Activated CD4-positive, alpha-beta T cell treated with anti-CD3 and anti-CD28 coated beads for 36 hours (primary cell): ENCODE measurements at regions of chr11 and their contacts with region 1.

Region 1: GRCh38 chr11:32893343-32894148 is 935 bp downstream of the QSER1 start:
- DNase-seq: peak; percentile 77
- ATAC-seq: peak; percentile 45
- H3K4me3 Mint-ChIP-seq: peak overlapping the region; percentile 97
- H3K27ac Mint-ChIP-seq: peak overlapping the region; percentile 98
- H3K4me1 Mint-ChIP-seq: peaks cover 38% of the 10 kb centered on the region
- H3K27me3 Mint-ChIP-seq: no peaks in the 10 kb centered on the region

Region 2: GRCh38 chr11:32090545-32091373 is 802.8 kb before region 1 on chr11 and contains the start of gene RCN1:
- CTCF ChIA-PET with region 1: no interaction called
- POLR2A ChIA-PET with region 1: no interaction called
- intact Hi-C with region 1: loop called in 1 of 2 experiments (anchors 2 kb)
- DNase-seq: peak; percentile 62
- ATAC-seq: peak; percentile 59
- H3K4me3 Mint-ChIP-seq: peak within 1 kb of the TSS; percentile 79
- H3K27ac Mint-ChIP-seq: peak within 1 kb of the TSS; percentile 85
- H3K4me1 Mint-ChIP-seq: peaks cover 43% of the 10 kb centered on the region
- H3K27me3 Mint-ChIP-seq: peaks cover 10% of the 10 kb centered on the region
- total RNA-seq, gene RCN1: 19.1 to 24.1 TPM

Region 3: DNA sequence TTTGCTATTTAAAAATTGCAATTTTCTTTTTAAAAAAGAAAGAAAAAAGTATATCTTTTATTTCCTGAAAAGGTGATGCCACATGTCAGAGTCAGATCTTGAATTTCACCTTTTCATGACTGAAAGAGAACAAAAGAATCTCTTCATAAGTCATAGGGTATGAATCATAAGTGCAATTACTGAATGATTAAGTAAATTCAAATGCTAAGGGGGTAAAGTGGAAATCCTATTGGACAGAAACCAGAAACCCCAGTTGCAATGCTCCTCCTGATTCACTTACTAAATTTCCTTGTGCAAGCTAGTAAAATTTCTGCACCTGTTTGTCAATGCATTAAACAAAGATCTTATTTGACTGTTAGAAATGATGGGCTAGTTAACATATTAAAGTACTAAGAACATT is 72.0 kb before region 1 on chr11:
- CTCF ChIA-PET with region 1: interaction called, 3 read pairs
- POLR2A ChIA-PET with region 1: interaction called, 9 read pairs
- intact Hi-C with region 1: loop called (anchors 2 kb)
- DNase-seq: no peak
- ATAC-seq: peak; percentile 66
- H3K4me3 Mint-ChIP-seq: no peak overlapping the region
- H3K27ac Mint-ChIP-seq: no peak overlapping the region
- H3K4me1 Mint-ChIP-seq: peaks cover 24% of the 10 kb centered on the region
- H3K27me3 Mint-ChIP-seq: no peaks in the 10 kb centered on the region

Region 4: DNA sequence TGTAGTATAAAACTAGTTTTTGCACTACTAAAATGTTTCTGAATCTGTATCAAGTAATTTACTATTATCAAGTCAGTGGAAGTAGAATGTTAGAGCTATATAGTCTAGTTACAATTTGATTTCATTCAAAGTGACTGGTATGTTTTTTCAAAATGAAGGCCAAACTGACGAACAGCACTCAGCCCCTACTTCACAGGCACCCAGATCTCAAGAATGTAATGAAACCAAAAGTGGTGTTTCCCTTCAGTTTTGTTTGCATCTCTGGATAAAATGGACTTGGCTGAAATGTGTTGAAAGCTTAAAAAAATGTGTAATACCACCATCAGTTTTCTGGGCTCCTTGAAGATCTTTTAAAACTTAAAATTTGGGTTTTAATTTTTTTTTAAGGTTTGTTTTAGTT is 45.5 kb after region 1 on chr11:
- CTCF ChIA-PET with region 1: no interaction called
- POLR2A ChIA-PET with region 1: interaction called, 11 read pairs
- intact Hi-C with region 1: no loop called
- DNase-seq: no peak
- ATAC-seq: no peak
- H3K4me3 Mint-ChIP-seq: no peak overlapping the region
- H3K27ac Mint-ChIP-seq: no peak overlapping the region
- H3K4me1 Mint-ChIP-seq: peaks cover 17% of the 10 kb centered on the region
- H3K27me3 Mint-ChIP-seq: no peaks in the 10 kb centered on the region

Region 5: DNA sequence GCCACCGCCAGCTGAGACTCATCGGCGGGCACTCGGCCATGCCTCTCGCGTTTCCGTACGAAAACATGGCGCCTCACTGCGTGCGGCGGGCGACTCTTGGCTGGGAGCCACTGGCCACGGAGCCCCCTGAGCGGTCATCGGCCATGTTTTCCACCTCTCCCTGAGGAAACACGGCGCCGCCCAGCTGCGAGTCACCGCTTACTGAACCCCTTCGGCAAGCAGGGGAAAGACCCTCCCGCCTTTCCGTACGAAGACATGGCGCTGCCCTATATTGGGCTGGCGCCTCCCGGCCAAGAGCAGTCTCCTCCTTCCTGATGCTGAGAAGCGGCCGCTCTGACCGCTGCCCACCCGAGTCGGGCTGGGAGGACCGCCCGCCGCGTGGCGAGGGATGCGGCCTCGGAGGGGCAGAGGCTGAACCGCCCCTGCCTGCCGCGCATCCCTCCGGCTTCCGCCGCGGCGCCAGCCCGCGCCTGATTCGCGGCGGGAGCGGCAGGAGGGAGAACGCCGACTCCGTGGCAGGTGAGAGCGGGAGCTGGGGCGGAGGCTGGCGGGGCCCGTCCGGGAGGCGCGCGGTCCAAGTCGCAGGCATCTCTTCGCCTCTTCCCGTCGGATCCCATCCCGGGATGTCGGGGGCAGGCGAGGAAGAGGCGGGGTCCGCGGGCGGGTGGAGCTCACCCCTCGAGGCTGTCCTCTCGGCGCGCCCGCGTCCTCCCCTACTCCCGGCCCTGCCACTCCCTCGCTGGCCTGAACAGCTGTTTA is 145.9 kb after region 1 on chr11 and contains the start of gene TCP11L1:
- CTCF ChIA-PET with region 1: interaction called, 4 read pairs
- POLR2A ChIA-PET with region 1: interaction called, 3 read pairs
- intact Hi-C with region 1: loop called (anchors 1 to 2 kb)
- DNase-seq: peak; percentile 89
- ATAC-seq: peak; percentile 71
- H3K4me3 Mint-ChIP-seq: peak within 1 kb of the TSS; percentile 87
- H3K27ac Mint-ChIP-seq: peak within 1 kb of the TSS; percentile 95
- H3K4me1 Mint-ChIP-seq: peaks cover 37% of the 10 kb centered on the region
- H3K27me3 Mint-ChIP-seq: peaks cover 5% of the 10 kb centered on the region
- total RNA-seq, gene TCP11L1: 7.9 to 8.8 TPM

Region 6: GRCh38 chr11:33161120-33162005 is 267.8 kb after region 1 on chr11 and contains the start of gene CSTF3:
- CTCF ChIA-PET with region 1: no interaction called
- POLR2A ChIA-PET with region 1: no interaction called
- intact Hi-C with region 1: loop called in 1 of 2 experiments (anchors 1 kb)
- DNase-seq: peak; percentile 99
- ATAC-seq: peak; percentile 97
- H3K4me3 Mint-ChIP-seq: peak within 1 kb of the TSS; percentile 96
- H3K27ac Mint-ChIP-seq: peak within 1 kb of the TSS; percentile 100
- H3K4me1 Mint-ChIP-seq: peaks cover 43% of the 10 kb centered on the region
- H3K27me3 Mint-ChIP-seq: no peaks in the 10 kb centered on the region
- total RNA-seq, gene CSTF3: 29.6 to 35.3 TPM

Region 7: GRCh38 chr11:33773987-33774735 is 880.6 kb after region 1 on chr11 and contains the start of gene FBXO3:
- CTCF ChIA-PET with region 1: no interaction called
- POLR2A ChIA-PET with region 1: no interaction called
- intact Hi-C with region 1: loop called in 1 of 2 experiments (anchors 2 kb)
- DNase-seq: peak; percentile 87
- ATAC-seq: peak; percentile 85
- H3K4me3 Mint-ChIP-seq: peak within 1 kb of the TSS; percentile 89
- H3K27ac Mint-ChIP-seq: peak within 1 kb of the TSS; percentile 75
- H3K4me1 Mint-ChIP-seq: peaks cover 44% of the 10 kb centered on the region
- H3K27me3 Mint-ChIP-seq: peaks cover 12% of the 10 kb centered on the region
- total RNA-seq, gene FBXO3: 11.4 to 12.2 TPM